ENCODE measurements at regions of chr14 and their contacts with region 1.

Region 1: DNA sequence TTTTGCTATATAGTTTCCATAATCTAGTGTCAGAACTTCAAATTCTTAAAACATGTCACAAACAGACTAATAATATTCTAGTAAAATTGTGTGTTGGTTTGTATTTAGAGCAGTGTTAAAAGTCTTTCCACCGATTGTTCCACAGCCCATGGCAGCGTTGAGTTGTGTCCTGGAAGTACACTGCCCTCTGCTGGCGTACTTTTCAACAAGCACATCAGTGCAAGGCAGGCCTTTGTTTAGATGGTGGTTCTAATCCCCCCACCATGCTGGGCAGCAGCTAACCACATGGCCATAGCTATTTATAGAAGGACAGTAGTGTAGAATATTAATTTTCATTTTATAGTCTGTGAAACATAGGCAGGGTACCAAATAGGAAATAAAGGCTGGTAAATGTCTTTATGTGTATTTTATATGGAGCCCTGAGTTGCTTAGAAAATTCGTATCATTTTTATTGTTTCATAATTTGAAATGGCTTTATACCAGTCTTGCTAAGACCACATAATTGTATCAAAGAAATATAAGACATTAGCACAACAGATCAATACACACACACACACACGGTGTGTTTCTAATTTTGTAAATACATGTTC is 235.4 kb downstream of the SEC23A start:
- DNase-seq: peak; percentile 27 to 70 (median 41)
- ATAC-seq: peak; percentile 96
- H3K4me3 ChIP-seq: no peak overlapping the region
- H3K27ac ChIP-seq: no peak overlapping the region
- H3K4me1 ChIP-seq: no peaks in the 10 kb centered on the region
- H3K27me3 ChIP-seq: no peaks in the 10 kb centered on the region
- CTCF ChIP-seq: peak; percentile 52 to 67 (median 66)
- EP300 ChIP-seq: no peak
- POLR2A ChIP-seq: no peak
- RAD21 ChIP-seq: peak; percentile 23 to 68; a peak in 2 of 4 replicates

Region 2: DNA sequence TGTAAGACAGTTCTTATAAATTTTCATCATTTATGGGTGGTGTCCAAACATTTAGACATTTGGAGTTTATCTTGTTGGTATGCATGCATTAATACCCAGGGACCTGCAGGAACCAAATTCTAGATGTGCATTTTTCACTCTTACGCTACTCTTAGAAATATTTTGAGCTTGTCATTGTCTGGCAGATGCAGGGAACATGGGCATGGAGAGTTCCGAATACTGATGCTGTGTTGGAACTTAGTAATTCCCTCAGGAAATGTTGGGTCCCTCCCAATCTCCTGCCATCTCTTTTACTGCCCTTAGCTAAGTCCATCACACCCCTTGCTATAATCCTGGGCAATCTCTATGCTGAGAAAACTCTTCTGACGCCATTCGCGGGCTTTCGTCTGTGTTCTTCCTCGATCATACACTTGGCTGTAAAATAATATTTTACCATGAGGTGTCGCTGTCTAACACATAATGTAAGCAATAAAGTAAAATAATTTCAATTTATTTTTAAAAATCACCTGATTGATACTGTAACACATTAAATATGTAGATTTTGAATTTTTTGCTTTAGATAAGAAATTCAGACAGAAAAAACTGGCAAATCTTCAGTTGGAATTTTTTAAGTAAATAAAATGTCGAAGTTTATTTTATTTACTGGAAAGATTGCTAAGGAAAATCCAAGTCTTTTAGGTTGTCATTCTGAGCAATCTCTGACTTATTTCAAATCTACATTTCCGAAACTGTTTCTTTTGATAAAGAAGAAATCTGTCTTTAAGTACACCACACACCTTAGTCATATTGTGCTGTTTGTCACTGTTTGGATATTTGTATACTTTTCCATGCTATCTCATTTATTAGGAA is 964.1 kb before region 1 on chr14:
- CTCF ChIA-PET with region 1: no interaction called
- POLR2A ChIA-PET with region 1: no interaction called
- in situ Hi-C with region 1: loop called (anchors 25 kb)
- intact Hi-C with region 1: loop called (anchors 2 kb)
- DNase-seq: peak; percentile 10 to 25 (median 20)
- ATAC-seq: peak; percentile 56; the same call in 2 of the 3 replicates
- H3K4me3 ChIP-seq: no peak overlapping the region
- H3K27ac ChIP-seq: no peak overlapping the region
- H3K4me1 ChIP-seq: no peaks in the 10 kb centered on the region
- H3K27me3 ChIP-seq: no peaks in the 10 kb centered on the region
- CTCF ChIP-seq: peak; percentile 23 to 52 (median 28); a peak in 3 of 6 replicates
- EP300 ChIP-seq: no peak
- POLR2A ChIP-seq: no peak
- RAD21 ChIP-seq: peak; percentile 26 to 59

Region 3: GRCh38 chr14:38125481-38126037 is 742.1 kb before region 1 on chr14:
- CTCF ChIA-PET with region 1: no interaction called
- POLR2A ChIA-PET with region 1: no interaction called
- in situ Hi-C with region 1: no loop called
- intact Hi-C with region 1: no loop called
- DNase-seq: no peak
- ATAC-seq: no peak
- H3K4me3 ChIP-seq: no peak overlapping the region
- H3K27ac ChIP-seq: no peak overlapping the region
- H3K4me1 ChIP-seq: no peaks in the 10 kb centered on the region
- H3K27me3 ChIP-seq: no peaks in the 10 kb centered on the region
- CTCF ChIP-seq: no peak
- EP300 ChIP-seq: no peak
- POLR2A ChIP-seq: no peak
- RAD21 ChIP-seq: no peak

Region 4: GRCh38 chr14:38721822-38722431 is 145.7 kb before region 1 on chr14:
- CTCF ChIA-PET with region 1: interaction called, 15 read pairs
- POLR2A ChIA-PET with region 1: no interaction called
- in situ Hi-C with region 1: no loop called
- intact Hi-C with region 1: loop called (anchors 1 kb)
- DNase-seq: peak; percentile 12 to 34 (median 26)
- ATAC-seq: peak; percentile 80
- H3K4me3 ChIP-seq: no peak overlapping the region
- H3K27ac ChIP-seq: no peak overlapping the region
- H3K4me1 ChIP-seq: no peaks in the 10 kb centered on the region
- H3K27me3 ChIP-seq: no peaks in the 10 kb centered on the region
- CTCF ChIP-seq: peak; percentile 27 to 61 (median 59); a peak in 5 of 6 replicates
- EP300 ChIP-seq: no peak
- POLR2A ChIP-seq: no peak
- RAD21 ChIP-seq: peak; percentile 47 to 65

Measured in K562 (cell line).